OCI-LY7 (cell line): ENCODE measurements at regions of chr2 and their contacts with region 1.

Region 1: DNA sequence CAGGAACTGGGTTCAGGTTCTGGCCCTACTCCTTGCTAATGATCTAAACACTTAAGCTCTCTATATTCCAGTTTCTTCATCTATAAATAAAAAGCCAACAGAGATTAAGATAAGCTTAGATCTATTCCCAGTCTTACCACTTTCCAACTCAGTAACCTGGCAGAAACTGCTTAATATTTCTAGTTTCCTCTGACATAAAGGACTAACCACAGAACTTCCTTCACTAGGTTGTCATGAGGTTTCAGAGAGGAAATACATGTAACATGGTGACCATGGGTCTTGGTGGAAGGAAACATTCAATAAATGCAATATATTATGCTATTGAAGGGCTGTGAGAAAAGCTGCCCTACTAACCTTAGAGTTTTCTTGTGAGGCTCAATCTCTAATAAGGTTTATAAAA is 114.4 kb upstream of the PDE1A start:
- DNase-seq: no peak
- H3K4me3 ChIP-seq: no peak overlapping the region
- H3K27ac ChIP-seq: no peak overlapping the region
- H3K4me1 ChIP-seq: no peaks in the 10 kb centered on the region
- CTCF ChIP-seq: no peak

Region 2: DNA sequence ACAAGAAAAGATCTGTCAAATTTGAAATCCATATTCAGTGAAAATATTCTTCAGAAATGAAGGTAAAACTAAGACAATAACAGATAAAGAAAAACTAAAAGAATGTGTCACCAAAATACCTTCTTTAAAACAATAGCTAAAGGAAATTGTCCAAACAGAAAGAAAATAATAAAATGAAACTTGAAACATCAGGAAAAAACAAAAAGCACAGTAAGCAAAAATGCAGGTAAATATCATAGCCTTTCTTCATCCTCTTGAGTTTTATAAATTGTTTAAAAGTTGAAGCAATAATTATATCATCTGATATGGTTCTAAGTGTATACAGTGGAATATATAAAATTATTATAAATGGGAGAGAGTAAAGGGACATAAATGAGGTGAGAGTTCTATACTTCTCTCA is 10.6 kb before region 1 on chr2:
- CTCF ChIA-PET with region 1: no interaction called
- POLR2A ChIA-PET with region 1: no interaction called
- intact Hi-C with region 1: no loop called
- DNase-seq: no peak
- H3K4me3 ChIP-seq: no peak overlapping the region
- H3K27ac ChIP-seq: no peak overlapping the region
- H3K4me1 ChIP-seq: no peaks in the 10 kb centered on the region
- CTCF ChIP-seq: no peak

Region 3: DNA sequence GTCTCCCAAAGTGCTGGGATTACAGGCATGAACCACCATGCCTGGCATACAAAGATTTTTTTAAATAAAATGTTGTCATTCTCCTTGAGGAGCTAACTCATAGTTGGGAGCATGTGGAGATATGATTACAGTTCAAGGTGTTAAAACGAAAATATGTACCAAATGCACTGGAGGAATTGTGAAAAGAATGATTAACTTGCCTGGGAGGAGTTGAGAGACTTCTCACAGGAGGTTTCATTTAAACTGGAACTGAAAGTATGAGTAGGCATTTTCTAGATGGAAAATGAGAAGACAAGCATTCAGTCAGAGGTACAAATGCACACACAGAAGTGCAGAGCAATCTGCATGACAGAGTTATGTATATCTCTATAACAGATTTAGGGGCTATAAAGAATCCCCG is 12.2 kb after region 1 on chr2:
- CTCF ChIA-PET with region 1: no interaction called
- POLR2A ChIA-PET with region 1: interaction called, 4 read pairs
- intact Hi-C with region 1: loop called (anchors 1 kb)
- DNase-seq: no peak
- H3K4me3 ChIP-seq: no peak overlapping the region
- H3K27ac ChIP-seq: no peak overlapping the region
- H3K4me1 ChIP-seq: no peaks in the 10 kb centered on the region
- CTCF ChIP-seq: no peak